Psoas muscle (tissue), 8 donors: ENCODE measurements at regions of chr12 and their contacts with region 1.

Region 1: GRCh38 chr12:52980693-52981423 is 25.4 kb upstream of the EIF4B start:
- DNase-seq: peak; percentile 85 to 89
- ATAC-seq: peak; percentile 92 to 98 (median 94)
- H3K4me3 ChIP-seq: no peak overlapping the region
- H3K27ac ChIP-seq: no peak overlapping the region
- H3K4me1 ChIP-seq: no peaks in the 10 kb centered on the region
- H3K27me3 ChIP-seq: peaks cover 0 to 15% (median 0%) of the 10 kb centered on the region in 3 donors
- CTCF ChIP-seq: peak; percentile 95

Region 2: DNA sequence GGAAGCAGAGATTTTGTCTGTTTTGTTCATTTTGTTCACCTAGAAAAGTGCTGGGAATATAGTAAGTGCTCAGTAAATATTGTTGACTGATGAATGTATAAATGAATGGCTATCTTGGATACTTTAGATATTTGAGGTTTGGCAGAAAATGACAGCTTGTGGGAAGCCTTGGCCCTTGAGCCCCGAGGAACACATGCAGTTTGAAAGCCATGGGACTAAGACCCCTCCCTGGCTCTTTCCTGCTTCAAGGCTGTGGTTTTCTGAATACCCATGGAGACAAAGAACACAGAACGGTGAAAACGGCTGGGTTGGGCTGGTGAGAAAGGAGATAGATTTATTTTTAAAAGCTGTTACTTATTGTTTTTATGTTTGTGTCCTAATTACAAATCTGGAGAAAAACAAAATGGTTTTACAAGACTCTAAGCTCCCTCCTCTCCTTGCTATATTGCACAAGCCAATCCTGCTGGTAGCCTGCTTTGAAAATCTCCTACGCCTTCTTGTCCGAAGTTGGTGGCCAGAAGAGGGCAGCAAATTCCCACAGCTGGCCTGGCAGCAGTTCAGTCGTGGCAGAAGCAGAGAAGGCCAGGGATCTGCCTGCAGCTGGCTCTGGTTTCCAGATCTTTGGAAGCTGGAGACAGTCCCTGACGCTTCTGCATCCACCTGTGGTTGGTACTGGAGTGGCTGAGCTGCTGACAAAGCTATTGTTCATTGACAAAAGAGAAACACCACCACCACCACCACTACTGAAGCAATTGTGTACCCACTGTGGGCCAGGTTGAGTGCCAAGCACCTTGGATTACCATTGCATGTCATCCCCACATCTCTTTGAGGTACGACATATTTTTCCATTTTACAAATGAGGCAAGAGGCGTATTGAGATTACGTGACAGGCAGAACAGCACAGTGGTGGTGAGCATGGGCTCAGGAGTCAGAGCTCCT is 608.4 kb before region 1 on chr12:
- intact Hi-C with region 1: loop called in 1 of 2 experiments (anchors 10 kb)
- DNase-seq: peak; percentile 75 to 86
- ATAC-seq: peak; percentile 52 to 84 (median 80)
- H3K4me3 ChIP-seq: no peak overlapping the region
- H3K27ac ChIP-seq: no peak overlapping the region
- H3K4me1 ChIP-seq: no peaks in the 10 kb centered on the region
- H3K27me3 ChIP-seq: peaks cover 0 to 5% (median 2%) of the 10 kb centered on the region in 3 donors
- CTCF ChIP-seq: peak; percentile 60

Region 3: DNA sequence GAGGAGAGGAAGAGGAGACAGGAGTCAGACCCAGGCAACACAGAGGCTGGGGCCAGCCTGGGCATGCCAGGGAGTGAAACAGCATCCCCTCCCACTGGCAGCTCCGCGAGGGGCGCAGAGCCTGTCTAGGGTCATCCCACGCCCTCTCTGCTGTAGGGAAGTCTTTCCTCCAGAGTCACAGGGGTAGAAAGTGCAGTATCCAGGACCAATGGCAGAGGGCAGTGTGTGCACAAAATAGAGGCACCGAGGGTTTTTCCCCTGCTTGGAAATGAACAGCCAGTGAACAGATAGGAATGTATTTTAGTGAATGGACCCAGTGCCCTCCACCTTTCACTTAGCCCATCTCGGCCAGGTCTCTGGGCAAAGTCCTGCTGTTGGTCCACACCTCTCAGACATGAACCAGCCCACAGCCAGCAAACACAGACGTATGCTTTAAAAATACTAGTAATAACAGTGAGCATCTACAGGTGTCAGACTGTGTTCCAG is 397.8 kb before region 1 on chr12:
- intact Hi-C with region 1: loop called in 1 of 2 experiments (anchors 5 kb)
- DNase-seq: peak in 1 of 2 donors; percentile 16
- ATAC-seq: peak in 3 of 4 donors; percentile 46 to 61 (median 49)
- H3K4me3 ChIP-seq: no peak overlapping the region
- H3K27ac ChIP-seq: no peak overlapping the region
- H3K4me1 ChIP-seq: no peaks in the 10 kb centered on the region
- H3K27me3 ChIP-seq: peaks cover 0 to 4% (median 0%) of the 10 kb centered on the region in 3 donors
- CTCF ChIP-seq: peak; percentile 51

Region 4: GRCh38 chr12:52884526-52885293 is 96.1 kb before region 1 on chr12:
- intact Hi-C with region 1: loop called (anchors 1 kb)
- DNase-seq: peak; percentile 71 to 81
- ATAC-seq: peak; percentile 83 to 89 (median 85)
- H3K4me3 ChIP-seq: no peak overlapping the region
- H3K27ac ChIP-seq: no peak overlapping the region
- H3K4me1 ChIP-seq: no peaks in the 10 kb centered on the region
- H3K27me3 ChIP-seq: peaks cover 0 to 14% (median 0%) of the 10 kb centered on the region in 3 donors
- CTCF ChIP-seq: peak; percentile 89

Region 5: DNA sequence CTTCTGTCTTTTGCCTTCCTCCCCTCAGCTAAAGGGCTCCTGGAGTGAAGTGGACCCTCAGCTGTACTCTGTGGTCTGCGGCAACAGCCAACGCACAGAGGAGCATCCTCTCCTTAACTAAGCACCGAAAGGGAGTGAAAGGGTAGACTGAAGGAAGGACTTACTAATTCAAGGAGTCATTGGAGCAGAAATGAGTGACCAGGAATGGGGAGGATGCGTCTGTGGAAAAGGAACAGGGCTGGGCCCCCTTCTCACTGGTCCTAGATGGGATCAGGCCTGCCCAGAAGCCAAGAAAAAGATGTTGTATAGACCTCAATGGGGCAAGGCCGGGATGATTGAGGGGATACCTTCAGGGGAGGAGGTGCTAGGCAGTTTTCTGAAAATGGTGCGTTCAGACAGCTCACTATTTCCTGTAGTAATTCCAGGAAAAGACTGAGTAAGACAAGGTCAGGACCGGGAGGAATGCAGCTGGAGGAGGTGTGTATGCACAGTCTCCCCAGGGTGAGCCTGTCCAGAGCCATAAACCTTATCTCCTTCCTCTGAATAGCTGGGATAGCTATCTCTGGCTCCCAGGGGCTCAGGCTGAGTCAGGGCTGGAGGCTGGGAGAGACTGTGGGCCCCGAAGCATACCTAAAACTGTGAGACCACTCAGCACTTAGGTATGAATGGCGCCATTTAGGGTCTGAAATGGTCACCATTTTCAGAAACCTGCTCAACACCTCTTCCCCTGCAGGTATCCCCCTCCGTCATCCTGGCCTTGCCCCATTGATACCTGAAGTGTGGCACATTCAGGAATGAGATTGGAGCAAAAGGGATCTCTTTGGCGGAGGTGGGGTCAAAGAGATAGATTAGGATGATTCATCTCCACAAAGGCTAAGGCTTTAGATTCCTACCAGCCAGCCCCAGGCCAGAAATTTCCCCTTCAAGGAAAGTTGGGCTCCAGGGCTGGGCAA is 55.8 kb before region 1 on chr12:
- intact Hi-C with region 1: no loop called
- DNase-seq: no peak
- ATAC-seq: no peak
- H3K4me3 ChIP-seq: no peak overlapping the region
- H3K27ac ChIP-seq: no peak overlapping the region
- H3K4me1 ChIP-seq: no peaks in the 10 kb centered on the region
- H3K27me3 ChIP-seq: peaks cover 0 to 16% (median 0%) of the 10 kb centered on the region in 3 donors
- CTCF ChIP-seq: no peak